ENCODE measurements at regions of chr15 and their contacts with region 1.

Region 1: DNA sequence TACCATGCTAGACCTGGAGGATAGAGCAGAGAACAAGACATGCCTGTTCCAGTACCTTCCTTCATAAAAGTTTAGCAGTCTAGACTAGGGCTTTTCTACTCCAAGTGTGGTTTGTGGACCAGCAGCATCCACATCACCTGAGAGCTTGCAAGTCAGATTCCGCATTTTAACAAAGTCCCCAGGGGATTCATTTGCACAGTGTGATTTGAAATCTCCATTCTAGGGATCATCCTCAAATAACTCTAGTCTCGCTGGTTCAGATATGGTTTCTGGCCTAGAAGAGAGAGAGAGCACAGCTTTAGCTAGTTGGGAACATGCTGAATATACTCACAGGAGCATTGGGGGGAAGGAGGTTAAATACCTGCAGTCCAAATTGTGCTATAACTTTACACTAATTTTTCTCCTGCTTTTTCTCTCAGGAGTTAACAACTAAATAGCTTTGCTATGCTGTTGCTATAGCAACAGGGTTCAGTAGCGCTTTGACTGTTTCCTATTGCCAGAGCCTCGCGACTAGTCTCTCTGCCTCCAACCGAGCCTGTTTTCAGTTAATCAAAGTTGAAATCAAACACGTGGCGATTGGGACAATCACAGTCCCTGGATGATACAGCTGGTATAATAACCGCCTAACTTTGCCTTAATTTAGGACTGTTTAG is 64.0 kb upstream of the RASGRF1 start:
- DNase-seq: no peak
- H3K4me3 Mint-ChIP-seq: no peak overlapping the region
- H3K27ac Mint-ChIP-seq: no peak overlapping the region
- H3K4me1 Mint-ChIP-seq: peaks cover 18% of the 10 kb centered on the region
- H3K27me3 Mint-ChIP-seq: no peaks in the 10 kb centered on the region
- CTCF ChIP-seq: no peak

Region 2: GRCh38 chr15:79475306-79475705 is 320.7 kb after region 1 on chr15:
- CTCF ChIA-PET with region 1: no interaction called
- intact Hi-C with region 1: loop called (anchors 10 kb)
- DNase-seq: no peak
- H3K4me3 Mint-ChIP-seq: no peak overlapping the region
- H3K27ac Mint-ChIP-seq: no peak overlapping the region
- H3K4me1 Mint-ChIP-seq: no peaks in the 10 kb centered on the region
- H3K27me3 Mint-ChIP-seq: no peaks in the 10 kb centered on the region
- CTCF ChIP-seq: no peak

Region 3: DNA sequence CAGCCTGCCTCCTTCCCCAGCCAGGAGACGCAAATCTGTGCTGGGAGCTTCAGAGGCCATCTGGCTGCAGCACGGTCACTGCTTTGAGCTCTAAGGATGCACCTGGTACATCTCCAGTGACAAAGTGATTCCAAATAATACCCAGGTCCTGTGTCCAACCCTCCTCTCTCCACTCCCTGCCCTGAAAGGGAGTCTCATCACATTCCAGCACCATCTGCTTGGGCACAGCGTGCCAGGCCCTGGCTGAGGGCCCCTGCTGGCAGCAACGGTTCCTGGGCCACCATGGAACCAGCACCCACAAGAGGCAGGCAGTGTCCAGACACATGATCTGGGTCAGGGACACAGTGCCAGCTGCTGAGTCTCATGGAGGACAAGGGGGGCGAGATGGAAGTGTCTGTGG is 660.9 kb after region 1 on chr15:
- CTCF ChIA-PET with region 1: no interaction called
- intact Hi-C with region 1: no loop called
- DNase-seq: no peak
- H3K4me3 Mint-ChIP-seq: no peak overlapping the region
- H3K27ac Mint-ChIP-seq: no peak overlapping the region
- H3K4me1 Mint-ChIP-seq: no peaks in the 10 kb centered on the region
- H3K27me3 Mint-ChIP-seq: no peaks in the 10 kb centered on the region
- CTCF ChIP-seq: no peak

Measured in Calu3 (cell line).